ENCODE measurements at regions of chr14 and their contacts with region 1.

Region 1: GRCh38 chr14:88667555-88668273 is 104.9 kb downstream of the ZC3H14 start:
- DNase-seq: peak; percentile 64
- H3K4me3 ChIP-seq: no peak overlapping the region
- H3K27ac ChIP-seq: no peak overlapping the region
- H3K4me1 ChIP-seq: no peaks in the 10 kb centered on the region
- H3K27me3 ChIP-seq: no peaks in the 10 kb centered on the region
- CTCF ChIP-seq: peak; percentile 81

Region 2: DNA sequence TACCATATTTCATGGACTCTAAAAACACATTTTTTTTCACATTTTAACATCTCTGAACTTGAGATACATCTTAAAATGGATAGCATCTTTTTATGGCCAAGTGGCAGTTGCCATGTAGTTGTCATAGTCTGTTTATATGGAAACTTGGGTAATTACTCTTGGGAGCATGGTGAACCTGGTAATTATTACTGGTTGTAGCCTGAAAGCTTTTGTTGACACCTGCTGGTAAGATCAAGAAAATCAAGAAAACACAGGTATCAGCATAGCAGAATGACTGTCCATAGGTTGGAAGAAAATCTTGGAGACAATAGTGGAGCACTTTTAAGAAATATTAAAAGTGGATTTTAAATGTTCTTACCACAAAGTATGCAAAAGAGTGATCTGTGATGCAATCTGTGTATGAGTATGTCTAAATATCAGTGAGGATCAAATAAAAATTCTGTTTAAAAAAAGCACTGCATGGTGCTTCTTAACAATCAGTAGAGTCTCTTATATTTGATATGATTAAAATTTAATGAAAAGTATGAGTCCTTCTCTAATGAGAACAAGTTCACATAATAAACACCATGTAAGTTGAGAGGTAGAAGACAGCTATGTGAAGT is 200.9 kb after region 1 on chr14:
- intact Hi-C with region 1: loop called (anchors 5 kb)
- DNase-seq: no peak
- H3K4me3 ChIP-seq: no peak overlapping the region
- H3K27ac ChIP-seq: no peak overlapping the region
- H3K4me1 ChIP-seq: no peaks in the 10 kb centered on the region
- H3K27me3 ChIP-seq: no peaks in the 10 kb centered on the region
- CTCF ChIP-seq: no peak

Region 3: DNA sequence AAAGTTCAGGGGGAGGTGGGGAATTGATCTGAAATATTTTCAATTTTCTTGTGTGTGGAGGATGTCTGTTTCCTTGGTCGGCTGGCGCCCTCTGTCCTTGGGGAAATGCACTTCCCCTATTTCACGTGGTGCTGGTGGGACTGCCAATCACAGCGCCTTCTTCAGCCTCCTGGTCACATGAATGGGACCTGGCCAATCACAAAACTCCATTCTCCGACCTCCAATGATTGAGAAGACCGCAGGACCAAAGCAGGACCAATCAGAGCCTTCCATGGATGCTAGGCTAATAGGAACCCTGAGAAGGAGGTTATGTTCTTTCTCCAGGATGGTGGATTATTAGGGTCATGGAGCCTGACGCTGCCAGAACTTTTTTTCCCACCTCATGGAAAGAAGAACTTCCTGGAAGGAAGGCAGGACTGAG is 345.4 kb after region 1 on chr14:
- intact Hi-C with region 1: loop called (anchors 5 kb)
- DNase-seq: peak; percentile 82
- H3K4me3 ChIP-seq: peak overlapping the region; percentile 15
- H3K27ac ChIP-seq: peak overlapping the region; percentile 50
- H3K4me1 ChIP-seq: no peaks in the 10 kb centered on the region
- H3K27me3 ChIP-seq: no peaks in the 10 kb centered on the region
- CTCF ChIP-seq: peak; percentile 54

Measured in colonic mucosa (tissue), 4 donors.